Activated CD8-positive, alpha-beta T cell treated with anti-CD3 and anti-CD28 coated beads, Interleukin-2, amount 10 ng/mL, durations not matched to agents 7 days and 5 days (primary cell): ENCODE measurements at regions of chr2 and their contacts with region 1.

Region 1: DNA sequence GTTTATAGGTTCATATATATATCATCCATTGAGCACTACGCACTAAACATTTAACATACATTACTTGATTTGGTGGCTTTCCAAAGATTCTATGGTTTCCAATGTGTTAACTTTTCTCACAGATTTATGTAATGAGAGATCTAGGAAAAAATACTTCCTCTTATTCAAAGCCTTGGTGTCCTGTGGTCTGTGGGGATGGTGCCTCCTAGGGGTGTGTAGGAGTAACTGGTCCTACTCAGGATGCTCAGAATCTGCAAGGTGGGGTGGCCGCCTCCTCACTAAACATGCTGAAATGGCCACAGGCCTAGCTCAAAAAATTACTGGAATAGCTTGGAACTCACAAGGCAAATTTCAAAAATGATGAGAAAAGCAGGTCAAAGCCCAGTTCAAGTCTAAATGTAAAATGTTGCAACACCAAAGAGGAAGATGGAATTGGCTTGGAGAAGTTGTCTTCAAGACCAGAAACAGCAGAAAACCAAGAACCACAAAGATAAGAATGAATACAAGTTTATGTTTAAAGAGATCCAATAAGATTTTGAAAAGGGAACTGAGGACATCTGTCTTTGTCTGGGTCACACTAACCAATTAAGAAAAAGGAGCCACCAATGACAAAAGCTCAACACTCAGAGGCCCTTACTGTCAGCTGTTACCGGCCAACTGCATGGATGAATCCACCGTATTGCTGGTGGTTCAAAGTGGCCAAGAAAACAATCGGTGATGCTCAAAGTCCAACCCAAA is 11.5 kb downstream of the GPR55 start:
- DNase-seq: no peak
- ATAC-seq: no peak
- H3K4me3 Mint-ChIP-seq: no peak overlapping the region
- H3K27ac Mint-ChIP-seq: no peak overlapping the region
- H3K4me1 Mint-ChIP-seq: peaks cover 47% of the 10 kb centered on the region
- H3K27me3 Mint-ChIP-seq: no peaks in the 10 kb centered on the region

Region 2: GRCh38 chr2:230902180-230902899 is 11.2 kb before region 1 on chr2:
- CTCF ChIA-PET with region 1: interaction called, 12 read pairs
- POLR2A ChIA-PET with region 1: no interaction called
- DNase-seq: peak; percentile 75
- ATAC-seq: peak; percentile 52
- H3K4me3 Mint-ChIP-seq: no peak overlapping the region
- H3K27ac Mint-ChIP-seq: no peak overlapping the region
- H3K4me1 Mint-ChIP-seq: peaks cover 37% of the 10 kb centered on the region
- H3K27me3 Mint-ChIP-seq: no peaks in the 10 kb centered on the region